ENCODE measurements at regions of chr10 and their contacts with region 1.

Region 1: GRCh38 chr10:135132-135600 is at the start of gene ZMYND11:
- DNase-seq: peak; percentile 68
- H3K4me3 Mint-ChIP-seq: peak within 1 kb of the TSS; percentile 79
- H3K27ac Mint-ChIP-seq: peak within 1 kb of the TSS; percentile 90
- H3K4me1 Mint-ChIP-seq: peaks cover 25% of the 10 kb centered on the region
- H3K27me3 Mint-ChIP-seq: no peaks in the 10 kb centered on the region
- total RNA-seq, gene ZMYND11: 15.9 to 19.4 TPM

Region 2: GRCh38 chr10:173741-174140 is 38.6 kb after region 1 on chr10:
- CTCF ChIA-PET with region 1: no interaction called
- POLR2A ChIA-PET with region 1: no interaction called
- intact Hi-C with region 1: no loop called
- DNase-seq: no peak
- H3K4me3 Mint-ChIP-seq: no peak overlapping the region
- H3K27ac Mint-ChIP-seq: no peak overlapping the region
- H3K4me1 Mint-ChIP-seq: peaks cover 5% of the 10 kb centered on the region
- H3K27me3 Mint-ChIP-seq: no peaks in the 10 kb centered on the region

Region 3: GRCh38 chr10:201328-201771 is 66.2 kb after region 1 on chr10:
- CTCF ChIA-PET with region 1: interaction called, 3 read pairs
- POLR2A ChIA-PET with region 1: no interaction called
- intact Hi-C with region 1: loop called (anchors 5 kb)
- DNase-seq: no peak
- H3K4me3 Mint-ChIP-seq: no peak overlapping the region
- H3K27ac Mint-ChIP-seq: peak overlapping the region; percentile 25
- H3K4me1 Mint-ChIP-seq: peaks cover 20% of the 10 kb centered on the region
- H3K27me3 Mint-ChIP-seq: no peaks in the 10 kb centered on the region